Left cardiac atrium (tissue), 4 donors: ENCODE measurements at regions of chr17 and their contacts with region 1.

Region 1: GRCh38 chr17:82551779-82552457 is 32.4 kb downstream of the FOXK2 start:
- DNase-seq: peak; percentile 77
- ATAC-seq: peak; percentile 84 to 85

Region 2: GRCh38 chr17:82494236-82495055 is 57.5 kb before region 1 on chr17:
- intact Hi-C with region 1: loop called in 1 of 2 experiments (anchors 5 kb)
- DNase-seq: peak; percentile 86
- ATAC-seq: peak; percentile 79 to 88